ENCODE measurements at regions of chr1 and their contacts with region 1.

Region 1: GRCh38 chr1:228165372-228166169 is at the start of gene IBA57:
- DNase-seq: peak; percentile 100
- ATAC-seq: peak; percentile 89
- H3K4me3 Mint-ChIP-seq: peak within 1 kb of the TSS; percentile 80
- H3K27ac Mint-ChIP-seq: peak within 1 kb of the TSS; percentile 87
- H3K4me1 Mint-ChIP-seq: peaks cover 35% of the 10 kb centered on the region
- H3K27me3 Mint-ChIP-seq: no peaks in the 10 kb centered on the region
- total RNA-seq, gene IBA57: 6.0 to 8.3 TPM

Region 2: GRCh38 chr1:226407497-226408284 is 1757.9 kb before region 1 on chr1 and contains the start of gene PARP1:
- CTCF ChIA-PET with region 1: no interaction called
- POLR2A ChIA-PET with region 1: no interaction called
- intact Hi-C with region 1: loop called in 1 of 2 experiments (anchors 10 kb)
- DNase-seq: peak; percentile 93
- ATAC-seq: peak; percentile 94
- H3K4me3 Mint-ChIP-seq: peak within 1 kb of the TSS; percentile 88
- H3K27ac Mint-ChIP-seq: peak within 1 kb of the TSS; percentile 94
- H3K4me1 Mint-ChIP-seq: peaks cover 42% of the 10 kb centered on the region
- H3K27me3 Mint-ChIP-seq: no peaks in the 10 kb centered on the region
- total RNA-seq, gene PARP1: 237 to 242 TPM

Region 3: DNA sequence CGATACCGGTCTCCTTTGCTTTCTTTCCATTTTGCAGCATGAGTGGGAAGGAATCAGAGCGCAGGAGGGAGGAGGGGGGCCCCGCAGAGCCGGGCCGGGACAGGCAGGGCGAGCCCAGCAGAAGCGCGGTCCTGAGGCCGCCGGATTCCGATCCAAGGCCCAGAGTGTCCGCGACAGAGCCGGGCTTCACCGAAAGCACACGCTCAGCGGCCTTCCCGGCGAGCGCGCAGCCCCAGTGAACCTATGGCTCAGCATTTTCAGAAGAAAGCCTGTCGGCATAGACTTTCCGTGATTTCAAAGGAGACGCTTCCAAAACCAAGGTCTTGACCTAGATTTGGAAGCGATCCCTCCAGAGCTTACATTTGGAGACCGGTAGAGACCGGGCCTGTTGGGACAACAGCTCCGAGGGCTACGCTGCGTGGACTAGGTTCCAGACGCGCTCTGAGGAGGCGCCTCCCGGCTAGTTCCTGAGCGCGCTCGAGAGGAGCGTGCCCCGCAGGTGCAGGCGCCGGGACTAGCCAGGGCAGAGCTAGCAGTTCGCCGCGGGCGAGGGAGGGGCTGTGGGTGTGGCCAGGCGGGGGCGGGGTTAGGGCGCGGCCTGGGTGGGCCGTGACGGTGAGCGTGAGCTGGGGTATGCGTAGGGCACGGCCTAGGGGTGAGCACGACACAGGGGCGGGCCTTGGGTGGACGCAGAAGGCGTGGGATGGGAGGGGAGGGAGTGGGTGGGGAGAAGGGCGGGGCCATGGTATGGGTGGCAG is 377.9 kb before region 1 on chr1:
- CTCF ChIA-PET with region 1: no interaction called
- POLR2A ChIA-PET with region 1: no interaction called
- intact Hi-C with region 1: loop called (anchors 1 to 5 kb)
- DNase-seq: peak; percentile 96
- ATAC-seq: peak; percentile 93
- H3K4me3 Mint-ChIP-seq: peak overlapping the region; percentile 69
- H3K27ac Mint-ChIP-seq: peak overlapping the region; percentile 22
- H3K4me1 Mint-ChIP-seq: peaks cover 14% of the 10 kb centered on the region
- H3K27me3 Mint-ChIP-seq: no peaks in the 10 kb centered on the region

Region 4: GRCh38 chr1:228102791-228103620 is 62.6 kb before region 1 on chr1 and contains the start of gene C1orf35:
- CTCF ChIA-PET with region 1: interaction called, 3 read pairs
- POLR2A ChIA-PET with region 1: interaction called, 3 read pairs
- intact Hi-C with region 1: loop called (anchors 1 kb)
- DNase-seq: peak; percentile 97
- ATAC-seq: peak; percentile 90
- H3K4me3 Mint-ChIP-seq: peak within 1 kb of the TSS; percentile 89
- H3K27ac Mint-ChIP-seq: peak within 1 kb of the TSS; percentile 91
- H3K4me1 Mint-ChIP-seq: peaks cover 22% of the 10 kb centered on the region
- H3K27me3 Mint-ChIP-seq: no peaks in the 10 kb centered on the region
- total RNA-seq, gene C1orf35: 14.6 to 22.5 TPM

Region 5: GRCh38 chr1:228139944-228140656 is 25.5 kb before region 1 on chr1 and contains the start of gene GUK1:
- CTCF ChIA-PET with region 1: interaction called, 29 read pairs
- POLR2A ChIA-PET with region 1: interaction called, 8 read pairs
- intact Hi-C with region 1: loop called (anchors 1 kb)
- DNase-seq: peak; percentile 100
- ATAC-seq: peak; percentile 95
- H3K4me3 Mint-ChIP-seq: peak within 1 kb of the TSS; percentile 97
- H3K27ac Mint-ChIP-seq: peak within 1 kb of the TSS; percentile 98
- H3K4me1 Mint-ChIP-seq: peaks cover 24% of the 10 kb centered on the region
- H3K27me3 Mint-ChIP-seq: peaks cover 2% of the 10 kb centered on the region
- total RNA-seq, gene GUK1: 196 to 270 TPM

Region 6: DNA sequence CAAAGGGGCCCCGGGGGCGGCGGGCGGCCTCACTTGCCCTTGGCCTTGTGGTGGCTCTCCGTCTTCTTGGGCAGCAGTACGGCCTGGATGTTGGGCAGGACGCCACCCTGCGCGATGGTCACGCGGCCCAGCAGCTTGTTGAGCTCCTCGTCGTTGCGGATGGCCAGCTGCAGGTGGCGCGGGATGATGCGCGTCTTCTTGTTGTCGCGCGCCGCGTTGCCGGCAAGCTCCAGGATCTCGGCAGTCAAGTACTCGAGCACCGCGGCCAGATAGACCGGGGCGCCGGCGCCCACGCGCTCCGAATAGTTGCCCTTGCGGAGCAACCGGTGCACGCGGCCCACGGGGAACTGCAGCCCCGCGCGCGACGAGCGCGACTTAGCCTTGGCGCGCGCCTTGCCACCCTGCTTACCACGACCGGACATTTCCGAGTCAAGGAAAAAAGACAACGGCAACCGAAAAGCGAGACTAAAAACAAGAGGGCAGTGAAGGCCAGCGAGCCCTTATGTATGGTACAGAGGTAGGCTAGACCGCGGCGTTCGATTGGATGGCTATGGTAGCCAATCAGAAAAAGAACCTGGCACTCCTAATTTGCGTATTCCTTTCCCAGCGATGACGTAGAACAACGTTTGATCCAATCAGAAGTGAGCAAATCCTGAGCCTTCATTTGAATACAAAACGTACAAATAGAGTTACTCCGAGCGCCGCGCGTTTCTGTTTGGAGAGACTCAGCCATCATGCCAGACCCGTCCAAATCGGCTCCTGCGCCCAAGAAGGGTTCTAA is 292.0 kb after region 1 on chr1:
- CTCF ChIA-PET with region 1: interaction called, 3 read pairs
- POLR2A ChIA-PET with region 1: no interaction called
- intact Hi-C with region 1: loop called in 1 of 2 experiments (anchors 1 kb)
- DNase-seq: peak; percentile 92
- ATAC-seq: peak; percentile 89
- H3K4me3 Mint-ChIP-seq: peak overlapping the region; percentile 88
- H3K27ac Mint-ChIP-seq: peak overlapping the region; percentile 96
- H3K4me1 Mint-ChIP-seq: peaks cover 30% of the 10 kb centered on the region
- H3K27me3 Mint-ChIP-seq: no peaks in the 10 kb centered on the region

Region 7: DNA sequence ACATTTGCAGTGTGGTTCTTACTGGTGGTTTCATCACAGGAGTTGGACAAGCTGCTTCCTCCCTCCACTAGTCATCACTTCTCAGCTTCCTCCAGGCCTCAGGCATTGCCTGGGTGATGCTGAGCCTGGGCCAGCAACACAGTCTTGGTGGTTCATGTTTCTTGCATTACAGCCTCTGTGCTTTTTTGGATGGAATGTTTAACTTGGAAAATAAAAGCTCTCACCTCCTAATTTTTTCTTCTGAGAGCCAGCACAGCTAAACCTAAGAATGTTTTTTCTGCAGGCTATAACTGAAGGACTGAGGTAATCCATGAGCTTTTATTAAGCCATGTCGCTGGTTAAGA is 503.6 kb after region 1 on chr1:
- CTCF ChIA-PET with region 1: no interaction called
- POLR2A ChIA-PET with region 1: no interaction called
- intact Hi-C with region 1: no loop called
- DNase-seq: no peak
- ATAC-seq: no peak
- H3K4me3 Mint-ChIP-seq: no peak overlapping the region
- H3K27ac Mint-ChIP-seq: no peak overlapping the region
- H3K4me1 Mint-ChIP-seq: no peaks in the 10 kb centered on the region
- H3K27me3 Mint-ChIP-seq: no peaks in the 10 kb centered on the region

Measured in activated CD4-positive, alpha-beta T cell treated with anti-CD3 and anti-CD28 coated beads for 36 hours (primary cell).